ENCODE measurements at regions of chr13 and their contacts with region 1.

Region 1: GRCh38 chr13:66069570-66069969 is 1160.6 kb downstream of the PCDH9 start:
- DNase-seq: no peak
- ATAC-seq: no peak
- H3K4me3 ChIP-seq: no peak overlapping the region
- H3K27ac ChIP-seq: no peak overlapping the region
- H3K4me1 ChIP-seq: no peaks in the 10 kb centered on the region
- H3K27me3 ChIP-seq: no peaks in the 10 kb centered on the region
- CTCF ChIP-seq: no peak

Region 2: DNA sequence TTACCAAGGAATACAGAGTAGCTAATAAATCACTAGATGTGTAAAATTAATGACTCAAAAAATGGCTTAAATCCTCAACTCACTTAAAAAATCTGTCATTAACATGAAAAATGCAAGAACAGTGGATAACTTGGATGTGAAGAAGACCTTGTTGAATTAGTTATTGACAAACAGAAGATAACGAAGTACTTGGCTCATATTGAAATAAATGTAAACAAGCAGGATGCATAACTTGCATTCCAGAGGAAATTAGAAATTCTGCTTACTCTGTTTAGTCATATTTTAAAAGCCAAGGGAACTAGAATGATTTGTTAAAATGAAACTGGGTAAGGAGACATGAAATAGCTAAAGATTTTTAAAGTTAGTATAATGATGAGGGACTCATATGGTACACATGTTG is 651.6 kb before region 1 on chr13:
- intact Hi-C with region 1: no loop called
- DNase-seq: no peak
- ATAC-seq: no peak
- H3K4me3 ChIP-seq: no peak overlapping the region
- H3K27ac ChIP-seq: no peak overlapping the region
- H3K4me1 ChIP-seq: no peaks in the 10 kb centered on the region
- H3K27me3 ChIP-seq: no peaks in the 10 kb centered on the region
- CTCF ChIP-seq: no peak

Region 3: DNA sequence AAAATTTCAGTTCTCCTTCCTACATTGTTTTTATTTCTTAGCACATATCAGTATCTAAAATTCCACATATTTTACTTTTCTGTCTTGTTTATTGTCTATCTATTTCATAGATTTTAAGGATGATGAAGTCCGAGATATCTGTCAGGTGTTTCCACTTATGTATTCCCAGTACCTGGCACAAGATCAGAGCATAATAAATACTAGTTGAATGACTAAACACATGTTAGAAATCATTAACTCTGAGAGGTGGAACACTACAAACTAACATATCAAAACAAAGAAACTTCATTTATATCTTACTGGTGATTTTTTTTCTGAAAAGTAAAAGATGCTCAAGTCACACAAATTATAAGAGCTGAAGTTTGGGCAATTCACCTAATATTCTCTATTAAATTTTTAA is 47.7 kb before region 1 on chr13:
- intact Hi-C with region 1: loop called in 1 of 10 experiments (anchors 1 kb)
- DNase-seq: no peak
- ATAC-seq: no peak
- H3K4me3 ChIP-seq: no peak overlapping the region
- H3K27ac ChIP-seq: no peak overlapping the region
- H3K4me1 ChIP-seq: no peaks in the 10 kb centered on the region
- H3K27me3 ChIP-seq: no peaks in the 10 kb centered on the region
- CTCF ChIP-seq: no peak